ENCODE measurements at regions of chr5 and their contacts with region 1.

Region 1: DNA sequence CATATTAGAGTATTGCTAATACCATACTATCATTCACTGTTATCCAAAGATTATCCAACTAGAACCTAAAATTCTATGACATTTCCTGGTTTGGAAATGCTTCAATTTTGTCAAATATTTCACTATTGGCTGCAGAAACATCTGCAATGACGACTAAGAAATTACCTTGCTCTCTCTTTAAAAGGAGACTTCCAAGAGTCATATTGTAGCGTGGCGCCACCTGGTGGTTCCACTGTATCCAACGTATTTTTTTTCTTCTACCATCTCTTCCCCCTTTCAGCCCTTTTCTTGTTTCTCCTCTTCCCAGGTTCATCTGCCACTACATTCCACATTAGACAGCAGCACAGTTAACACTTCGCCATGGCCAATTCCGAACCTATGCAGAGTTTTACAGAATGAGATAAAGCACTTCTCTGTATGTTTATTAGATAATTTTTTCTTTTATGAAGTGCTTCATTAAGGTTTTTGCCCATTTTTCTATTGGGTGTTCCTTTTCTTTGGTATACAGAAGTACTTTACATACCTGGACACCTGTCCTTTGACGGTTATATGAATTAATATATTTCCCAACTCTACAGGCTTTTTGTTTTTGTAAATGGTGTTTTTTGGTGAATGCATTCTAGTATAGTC is 153.5 kb downstream of the CDC42SE2 start:
- DNase-seq: peak; percentile 49 to 86 (median 70)
- ATAC-seq: peak in 2 of 4 donors; percentile 47 to 59
- H3K4me3 ChIP-seq: no peak overlapping the region
- H3K27ac ChIP-seq: no peak overlapping the region
- H3K4me1 ChIP-seq: peaks cover 0 to 6% (median 0%) of the 10 kb centered on the region in 12 donors
- H3K27me3 ChIP-seq: no peaks in the 10 kb centered on the region
- CTCF ChIP-seq: peak; percentile 71 to 93 (median 84)
- POLR2A ChIP-seq: no peak

Region 2: GRCh38 chr5:131170540-131171275 is 246.6 kb before region 1 on chr5 and contains the start of gene LYRM7:
- intact Hi-C with region 1: loop called in 8 of 10 experiments (anchors 1 to 10 kb)
- DNase-seq: peak; percentile 93 to 98 (median 97)
- ATAC-seq: peak; percentile 98 to 99 (median 99)
- H3K4me3 ChIP-seq: peak within 1 kb of the TSS; percentile 45 to 78 (median 68)
- H3K27ac ChIP-seq: peak within 1 kb of the TSS; percentile 5 to 89 (median 83)
- H3K4me1 ChIP-seq: peaks cover 0 to 23% (median 19%) of the 10 kb centered on the region in 12 donors
- H3K27me3 ChIP-seq: no peaks in the 10 kb centered on the region
- CTCF ChIP-seq: peak in 1 of 12 donors; percentile 13
- POLR2A ChIP-seq: peak; percentile 58 to 79
- total RNA-seq, gene LYRM7: 11.8 to 27.1 (median 20.3) TPM

Region 3: GRCh38 chr5:131563434-131564228 is 146.3 kb after region 1 on chr5:
- intact Hi-C with region 1: no loop called
- DNase-seq: no peak
- ATAC-seq: no peak
- H3K4me3 ChIP-seq: no peak overlapping the region
- H3K27ac ChIP-seq: no peak overlapping the region
- H3K4me1 ChIP-seq: no peaks in the 10 kb centered on the region
- H3K27me3 ChIP-seq: no peaks in the 10 kb centered on the region
- CTCF ChIP-seq: no peak
- POLR2A ChIP-seq: no peak

Measured in heart left ventricle (tissue), 16 donors.